Posterior cingulate gyrus (tissue), 11 donors: ENCODE measurements at regions of chr2 and their contacts with region 1.

Region 1: GRCh38 chr2:64873472-64873924 is 115.7 kb upstream of the SLC1A4 start:
- DNase-seq: peak; percentile 63 to 96 (median 86)

Region 2: DNA sequence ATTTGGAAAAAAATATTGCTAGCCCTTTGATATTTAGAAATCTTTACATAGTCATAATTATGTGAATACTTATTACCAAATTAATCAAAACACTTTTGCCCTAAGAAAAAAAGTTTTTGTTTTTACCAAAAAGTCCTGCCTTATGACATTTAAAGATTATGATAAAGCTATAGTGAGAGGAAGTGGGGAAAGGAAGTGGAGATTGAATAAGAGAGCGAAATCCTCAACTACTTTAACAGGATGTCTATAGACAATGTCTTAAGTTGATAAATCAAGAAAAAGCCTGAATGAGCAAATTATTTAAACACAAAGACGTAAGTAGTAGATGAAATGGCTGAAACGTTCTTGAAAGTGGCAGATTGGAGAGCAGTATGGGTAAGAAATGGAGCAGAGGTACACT is 833.3 kb before region 1 on chr2:
- intact Hi-C with region 1: loop called (anchors 10 kb)
- DNase-seq: no peak